CD8-positive, alpha-beta T cell (primary cell): ENCODE measurements at regions of chr19 and their contacts with region 1.

Region 1: GRCh38 chr19:36169084-36169760 is 17.0 kb upstream of the COX7A1 start:
- DNase-seq: no peak
- ATAC-seq: no peak
- H3K4me3 ChIP-seq: no peak overlapping the region
- H3K4me3 Mint-ChIP-seq: no peak overlapping the region
- H3K27ac ChIP-seq: no peak overlapping the region
- H3K27ac Mint-ChIP-seq: no peak overlapping the region
- H3K4me1 ChIP-seq: peaks cover 4% of the 10 kb centered on the region
- H3K4me1 Mint-ChIP-seq: peaks cover 3% of the 10 kb centered on the region
- H3K27me3 ChIP-seq: no peaks in the 10 kb centered on the region
- H3K27me3 Mint-ChIP-seq: no peaks in the 10 kb centered on the region
- CTCF ChIP-seq: no peak

Region 2: DNA sequence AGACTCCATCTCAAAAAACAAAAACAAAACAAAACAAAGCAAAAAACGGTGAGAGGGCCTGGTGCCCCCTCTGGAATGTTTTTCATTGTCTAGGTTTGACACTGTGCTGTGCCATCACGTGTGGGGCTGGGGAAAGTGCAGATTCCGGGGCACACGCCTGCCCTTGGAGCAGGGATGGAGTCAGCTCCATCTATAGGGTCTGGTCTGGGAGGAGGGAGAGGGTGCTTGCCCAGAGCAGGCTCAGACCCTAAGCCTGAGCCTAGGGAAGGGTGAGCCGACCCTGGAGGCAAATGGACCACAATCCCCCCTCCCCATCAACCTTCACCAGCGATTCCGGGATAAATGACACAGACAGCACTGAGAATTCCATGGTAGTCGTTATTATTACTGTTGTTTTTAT is 475.8 kb before region 1 on chr19:
- CTCF ChIA-PET with region 1: no interaction called
- POLR2A ChIA-PET with region 1: no interaction called
- intact Hi-C with region 1: no loop called
- DNase-seq: no peak
- ATAC-seq: peak; percentile 4
- H3K4me3 ChIP-seq: no peak overlapping the region
- H3K4me3 Mint-ChIP-seq: no peak overlapping the region
- H3K27ac ChIP-seq: no peak overlapping the region
- H3K27ac Mint-ChIP-seq: no peak overlapping the region
- H3K4me1 ChIP-seq: no peaks in the 10 kb centered on the region
- H3K4me1 Mint-ChIP-seq: no peaks in the 10 kb centered on the region
- H3K27me3 ChIP-seq: no peaks in the 10 kb centered on the region
- H3K27me3 Mint-ChIP-seq: no peaks in the 10 kb centered on the region
- CTCF ChIP-seq: no peak

Region 3: DNA sequence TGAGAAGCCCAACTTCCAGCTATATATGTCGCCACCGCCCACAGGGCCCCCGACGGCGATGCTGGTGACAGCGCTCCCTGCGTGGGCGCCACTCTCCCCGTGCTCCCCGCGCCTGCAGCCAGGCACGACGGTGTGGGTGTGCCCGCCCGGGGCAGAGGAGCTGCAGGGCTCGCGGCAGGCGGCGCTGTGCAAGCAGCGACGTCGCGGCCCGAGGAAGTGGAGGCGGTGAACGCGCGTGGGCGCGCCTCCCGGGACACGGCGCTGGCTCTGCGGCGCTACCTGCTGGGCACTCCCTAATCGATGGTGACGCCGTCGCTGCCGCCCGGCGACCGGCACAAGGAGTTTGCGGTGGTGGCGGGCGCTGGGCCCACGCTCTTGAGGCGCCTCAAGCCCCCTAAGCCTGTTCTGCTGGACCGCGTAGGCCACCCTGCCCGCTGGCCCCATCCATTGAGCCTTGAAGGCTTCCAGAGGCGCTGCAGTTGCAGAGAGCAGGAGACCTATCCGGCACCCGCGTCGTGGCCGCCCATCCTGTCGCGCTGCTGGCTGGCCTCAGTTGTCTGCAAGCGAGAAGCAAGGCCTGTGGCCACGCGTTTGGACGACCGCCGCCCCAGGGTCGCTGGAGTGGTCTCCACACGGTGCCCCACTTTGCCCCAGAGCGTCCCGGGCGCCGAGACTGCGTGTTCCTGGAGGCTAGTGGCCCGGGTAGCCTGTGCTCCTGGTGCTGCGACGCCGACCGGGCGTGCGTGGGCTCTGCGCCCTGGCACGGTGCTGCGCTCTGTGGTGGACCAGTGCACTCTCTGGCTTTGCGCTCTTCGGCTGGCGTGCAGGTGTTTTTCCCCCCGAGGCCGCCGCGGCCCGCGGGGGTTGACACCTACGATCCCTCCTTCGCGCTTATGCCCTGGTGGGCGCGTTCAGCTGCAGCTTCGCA is 209.9 kb before region 1 on chr19:
- CTCF ChIA-PET with region 1: interaction called, 4 read pairs
- POLR2A ChIA-PET with region 1: no interaction called
- intact Hi-C with region 1: loop called in 1 of 2 experiments (anchors 1 kb)
- DNase-seq: peak; percentile 60 to 93 (median 82)
- ATAC-seq: peak; percentile 99
- H3K4me3 ChIP-seq: peak overlapping the region; percentile 57 to 62
- H3K4me3 Mint-ChIP-seq: peak overlapping the region; percentile 70
- H3K27ac ChIP-seq: peak overlapping the region in 1 of 2 experiments; percentile 25
- H3K27ac Mint-ChIP-seq: no peak overlapping the region
- H3K4me1 ChIP-seq: peaks cover 43% of the 10 kb centered on the region
- H3K4me1 Mint-ChIP-seq: peaks cover 37% of the 10 kb centered on the region
- H3K27me3 ChIP-seq: peaks cover 0 to 4% of the 10 kb centered on the region in 2 experiments
- H3K27me3 Mint-ChIP-seq: peaks cover 4% of the 10 kb centered on the region
- CTCF ChIP-seq: peak; percentile 77

Region 4: GRCh38 chr19:35995048-35995993 is 173.9 kb before region 1 on chr19 and contains the start of gene SDHAF1:
- CTCF ChIA-PET with region 1: no interaction called
- POLR2A ChIA-PET with region 1: no interaction called
- intact Hi-C with region 1: loop called in 1 of 2 experiments (anchors 1 kb)
- DNase-seq: peak; percentile 80 to 96 (median 92)
- ATAC-seq: peak; percentile 88
- H3K4me3 ChIP-seq: peak within 1 kb of the TSS; percentile 73 to 95
- H3K4me3 Mint-ChIP-seq: peak within 1 kb of the TSS; percentile 93
- H3K27ac ChIP-seq: peak within 1 kb of the TSS; percentile 55 to 69
- H3K27ac Mint-ChIP-seq: peak within 1 kb of the TSS; percentile 94
- H3K4me1 ChIP-seq: peaks cover 22% of the 10 kb centered on the region
- H3K4me1 Mint-ChIP-seq: peaks cover 35% of the 10 kb centered on the region
- H3K27me3 ChIP-seq: peaks cover 0 to 4% of the 10 kb centered on the region in 2 experiments
- H3K27me3 Mint-ChIP-seq: no peaks in the 10 kb centered on the region
- CTCF ChIP-seq: no peak
- total RNA-seq, gene SDHAF1: 7.3 TPM

Region 5: GRCh38 chr19:36054119-36054732 is 115.0 kb before region 1 on chr19 and contains the start of gene THAP8:
- CTCF ChIA-PET with region 1: interaction called, 3 read pairs
- POLR2A ChIA-PET with region 1: no interaction called
- intact Hi-C with region 1: loop called in 1 of 2 experiments (anchors 2 kb)
- DNase-seq: peak; percentile 99 to 100 (median 100)
- ATAC-seq: peak; percentile 86
- H3K4me3 ChIP-seq: peak within 1 kb of the TSS; percentile 74 to 86
- H3K4me3 Mint-ChIP-seq: peak within 1 kb of the TSS; percentile 96
- H3K27ac ChIP-seq: peak within 1 kb of the TSS; percentile 95 to 96
- H3K27ac Mint-ChIP-seq: peak within 1 kb of the TSS; percentile 97
- H3K4me1 ChIP-seq: peaks cover 17% of the 10 kb centered on the region
- H3K4me1 Mint-ChIP-seq: peaks cover 27% of the 10 kb centered on the region
- H3K27me3 ChIP-seq: no peaks in the 10 kb centered on the region
- H3K27me3 Mint-ChIP-seq: no peaks in the 10 kb centered on the region
- CTCF ChIP-seq: peak; percentile 66
- total RNA-seq, gene THAP8: 0.31 to 0.57 TPM

Region 6: GRCh38 chr19:36060430-36060829 is 108.8 kb before region 1 on chr19:
- CTCF ChIA-PET with region 1: interaction called, 7 read pairs
- POLR2A ChIA-PET with region 1: no interaction called
- intact Hi-C with region 1: loop called (anchors 1 to 2 kb)
- DNase-seq: peak in 4 of 9 experiments; percentile 15 to 45 (median 26)
- ATAC-seq: no peak
- H3K4me3 ChIP-seq: no peak overlapping the region
- H3K4me3 Mint-ChIP-seq: no peak overlapping the region
- H3K27ac ChIP-seq: no peak overlapping the region
- H3K27ac Mint-ChIP-seq: no peak overlapping the region
- H3K4me1 ChIP-seq: peaks cover 3% of the 10 kb centered on the region
- H3K4me1 Mint-ChIP-seq: peaks cover 6% of the 10 kb centered on the region
- H3K27me3 ChIP-seq: no peaks in the 10 kb centered on the region
- H3K27me3 Mint-ChIP-seq: no peaks in the 10 kb centered on the region
- CTCF ChIP-seq: no peak

Region 7: GRCh38 chr19:36132489-36132891 is 36.7 kb before region 1 on chr19:
- CTCF ChIA-PET with region 1: interaction called, 167 read pairs
- POLR2A ChIA-PET with region 1: interaction called, 7 read pairs
- intact Hi-C with region 1: loop called in 1 of 2 experiments (anchors 1 kb)
- DNase-seq: peak in 4 of 9 experiments; percentile 19 to 60 (median 37)
- ATAC-seq: no peak
- H3K4me3 ChIP-seq: no peak overlapping the region
- H3K4me3 Mint-ChIP-seq: no peak overlapping the region
- H3K27ac ChIP-seq: peak overlapping the region in 1 of 2 experiments; percentile 54
- H3K27ac Mint-ChIP-seq: no peak overlapping the region
- H3K4me1 ChIP-seq: peaks cover 5% of the 10 kb centered on the region
- H3K4me1 Mint-ChIP-seq: peaks cover 15% of the 10 kb centered on the region
- H3K27me3 ChIP-seq: no peaks in the 10 kb centered on the region
- H3K27me3 Mint-ChIP-seq: no peaks in the 10 kb centered on the region
- CTCF ChIP-seq: no peak

Region 8: GRCh38 chr19:36139473-36140303 is 29.5 kb before region 1 on chr19 and contains the start of gene CAPNS1:
- CTCF ChIA-PET with region 1: interaction called, 3 read pairs
- POLR2A ChIA-PET with region 1: no interaction called
- intact Hi-C with region 1: loop called (anchors 1 kb)
- DNase-seq: peak; percentile 77 to 96 (median 92)
- ATAC-seq: peak; percentile 55
- H3K4me3 ChIP-seq: peak within 1 kb of the TSS; percentile 90 to 99
- H3K4me3 Mint-ChIP-seq: peak within 1 kb of the TSS; percentile 96
- H3K27ac ChIP-seq: peak within 1 kb of the TSS; percentile 83 to 90
- H3K27ac Mint-ChIP-seq: peak within 1 kb of the TSS; percentile 93
- H3K4me1 ChIP-seq: peaks cover 13% of the 10 kb centered on the region
- H3K4me1 Mint-ChIP-seq: peaks cover 14% of the 10 kb centered on the region
- H3K27me3 ChIP-seq: no peaks in the 10 kb centered on the region
- H3K27me3 Mint-ChIP-seq: no peaks in the 10 kb centered on the region
- CTCF ChIP-seq: peak; percentile 26
- total RNA-seq, gene CAPNS1: 141 to 146 TPM